ENCODE measurements at regions of chr10 and their contacts with region 1.

Region 1: DNA sequence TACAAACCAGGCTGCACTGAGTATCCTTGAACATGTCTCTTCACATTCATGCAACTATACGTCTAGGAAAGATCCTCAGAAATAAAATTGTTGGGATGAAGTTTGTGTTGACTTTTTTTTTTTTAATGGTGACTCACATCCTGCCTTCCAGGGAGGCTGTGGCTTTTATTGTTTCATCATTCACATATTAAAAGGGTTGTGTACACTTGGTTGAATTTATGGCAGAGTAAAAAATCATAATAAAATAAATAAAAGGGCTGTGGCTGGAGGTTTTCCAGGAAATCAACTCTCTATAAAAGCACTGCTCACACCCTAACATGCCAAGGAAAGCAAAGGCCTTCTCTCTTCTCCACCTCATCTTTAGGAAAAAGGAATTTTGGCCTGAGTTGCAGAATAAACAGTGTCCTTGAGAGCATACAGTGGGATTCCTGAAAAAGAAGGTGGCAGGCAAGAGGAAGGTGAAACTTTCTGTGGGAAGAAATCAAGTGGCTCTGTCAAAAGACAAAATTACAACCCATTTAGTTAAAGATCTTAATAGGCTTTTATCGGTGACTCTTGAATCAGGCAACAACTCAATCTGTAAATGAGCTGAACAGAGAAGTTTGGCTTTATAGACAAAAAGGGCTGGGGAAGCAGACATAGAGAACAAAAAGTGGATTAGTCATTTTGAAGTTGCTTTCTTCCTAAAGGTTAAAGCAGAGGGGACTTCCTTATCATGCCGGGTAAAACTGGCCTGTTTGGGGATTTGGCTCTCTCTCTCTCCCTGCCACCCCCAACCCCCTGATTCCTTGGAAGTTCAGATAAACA is 41.6 kb upstream of the FHIP2A start:
- DNase-seq: peak in 1 of 3 donors; percentile 52
- ATAC-seq: peak; percentile 95
- H3K4me3 ChIP-seq: no peak overlapping the region
- H3K4me1 ChIP-seq: peaks cover 18% of the 10 kb centered on the region
- CTCF ChIP-seq: no peak

Region 2: DNA sequence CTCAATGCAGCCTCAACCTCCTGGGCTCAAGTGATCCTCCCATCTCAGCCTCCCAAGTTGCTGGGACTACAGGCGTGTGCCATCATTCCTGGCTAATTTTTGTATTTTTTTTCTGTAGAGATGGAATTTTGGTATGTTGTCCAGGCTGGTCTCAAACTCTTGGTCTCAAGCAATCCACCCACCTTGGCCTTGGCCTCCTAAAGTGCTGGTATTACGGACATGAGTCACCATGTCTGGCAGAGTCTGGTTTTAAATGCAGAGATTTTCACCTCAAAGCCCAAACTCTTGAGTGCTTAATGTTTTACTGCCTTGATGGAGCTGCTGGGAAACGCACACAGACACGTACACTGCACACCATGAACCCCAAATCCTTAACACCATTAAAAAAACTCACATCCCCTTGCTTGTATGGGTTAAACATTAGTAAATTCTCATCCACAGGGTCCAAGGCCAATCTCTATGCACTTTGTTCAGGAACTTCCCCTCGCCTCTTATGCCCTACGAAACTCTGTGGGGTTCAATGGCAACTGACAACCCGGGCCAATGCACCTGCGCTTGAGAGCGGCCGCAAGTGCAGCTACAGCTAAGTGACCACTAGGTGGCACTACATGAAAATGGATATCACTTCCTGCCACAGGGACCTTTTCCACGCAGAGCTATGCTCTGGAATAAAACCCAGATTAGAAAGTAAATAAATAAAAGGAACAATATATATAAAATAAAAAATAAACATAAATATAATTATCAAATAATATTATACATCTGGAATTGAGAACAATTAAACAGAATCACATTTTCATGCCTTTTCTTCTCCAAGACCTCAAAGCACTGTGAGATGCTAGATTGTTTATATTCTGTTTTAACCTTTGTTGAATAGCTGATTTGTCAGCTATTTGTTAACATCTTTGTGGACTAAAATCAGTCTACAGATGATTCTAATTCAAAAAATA is 308.8 kb before region 1 on chr10:
- intact Hi-C with region 1: loop called in 1 of 2 experiments (anchors 10 kb)
- DNase-seq: peak; percentile 71 to 79 (median 78)
- ATAC-seq: peak; percentile 91
- H3K4me3 ChIP-seq: no peak overlapping the region
- H3K4me1 ChIP-seq: peaks cover 18% of the 10 kb centered on the region
- CTCF ChIP-seq: peak; percentile 86

Measured in mucosa of descending colon (tissue), 3 donors.